ENCODE measurements at regions of chr10 and their contacts with region 1.

Region 1: GRCh38 chr10:125936331-125936730 is 40.0 kb downstream of the FANK1 start:
- DNase-seq: no peak
- H3K4me3 ChIP-seq: no peak overlapping the region
- H3K27ac ChIP-seq: no peak overlapping the region
- H3K27me3 ChIP-seq: peaks cover 8% of the 10 kb centered on the region
- CTCF ChIP-seq: no peak

Region 2: DNA sequence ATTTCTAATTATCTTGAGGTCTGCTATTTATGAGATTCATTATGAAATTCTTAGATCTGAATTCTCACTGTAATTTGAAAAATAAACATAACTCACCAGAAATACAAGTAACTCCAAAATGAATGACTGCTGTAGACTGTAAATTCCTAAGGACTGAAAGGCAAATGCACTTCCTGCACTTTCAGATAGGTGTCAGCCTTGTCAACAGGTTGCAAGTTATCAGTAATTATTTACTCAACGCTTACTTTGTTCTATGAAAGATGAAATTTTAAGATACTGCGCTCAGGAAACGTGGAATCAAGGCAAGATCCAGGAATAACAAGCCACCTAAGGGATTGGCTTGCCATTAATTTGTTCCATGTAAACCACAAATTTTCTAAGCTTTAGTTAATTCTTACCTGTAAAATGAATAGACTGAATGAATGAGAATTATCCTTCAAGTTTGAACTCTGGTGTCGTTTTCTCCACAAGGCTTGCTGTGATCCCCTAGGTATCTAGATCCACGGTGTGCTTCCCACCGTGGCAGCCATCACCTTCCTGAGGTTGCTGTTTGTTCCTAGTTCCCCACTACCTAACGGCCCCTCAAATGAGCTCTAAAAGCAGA is 67.9 kb before region 1 on chr10:
- CTCF ChIA-PET with region 1: interaction called, 14 read pairs
- POLR2A ChIA-PET with region 1: no interaction called
- DNase-seq: peak; percentile 32
- H3K4me3 ChIP-seq: no peak overlapping the region
- H3K27ac ChIP-seq: no peak overlapping the region
- H3K27me3 ChIP-seq: no peaks in the 10 kb centered on the region
- CTCF ChIP-seq: peak; percentile 80

Region 3: DNA sequence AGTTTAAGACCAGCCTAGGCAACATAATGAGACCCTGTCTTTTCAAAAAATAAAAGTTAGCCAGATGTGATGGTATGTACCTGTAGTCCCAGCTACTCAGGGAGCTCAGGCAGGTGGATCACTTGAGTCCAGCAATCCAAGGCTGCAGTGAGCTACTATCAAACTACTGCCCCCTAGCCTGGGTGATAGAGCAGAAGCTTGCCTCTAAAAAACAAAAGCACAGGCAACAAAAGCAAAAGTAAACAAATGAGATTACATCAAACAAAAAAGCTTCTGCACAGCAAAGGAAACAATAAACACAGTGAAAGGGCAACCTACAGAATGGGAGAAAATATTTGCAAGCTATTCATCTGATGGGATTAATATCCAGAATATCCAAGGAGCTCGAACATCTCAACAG is 25.4 kb after region 1 on chr10:
- CTCF ChIA-PET with region 1: interaction called, 12 read pairs
- POLR2A ChIA-PET with region 1: no interaction called
- DNase-seq: no peak
- H3K4me3 ChIP-seq: no peak overlapping the region
- H3K27ac ChIP-seq: no peak overlapping the region
- H3K27me3 ChIP-seq: peaks cover 4% of the 10 kb centered on the region
- CTCF ChIP-seq: no peak

Region 4: DNA sequence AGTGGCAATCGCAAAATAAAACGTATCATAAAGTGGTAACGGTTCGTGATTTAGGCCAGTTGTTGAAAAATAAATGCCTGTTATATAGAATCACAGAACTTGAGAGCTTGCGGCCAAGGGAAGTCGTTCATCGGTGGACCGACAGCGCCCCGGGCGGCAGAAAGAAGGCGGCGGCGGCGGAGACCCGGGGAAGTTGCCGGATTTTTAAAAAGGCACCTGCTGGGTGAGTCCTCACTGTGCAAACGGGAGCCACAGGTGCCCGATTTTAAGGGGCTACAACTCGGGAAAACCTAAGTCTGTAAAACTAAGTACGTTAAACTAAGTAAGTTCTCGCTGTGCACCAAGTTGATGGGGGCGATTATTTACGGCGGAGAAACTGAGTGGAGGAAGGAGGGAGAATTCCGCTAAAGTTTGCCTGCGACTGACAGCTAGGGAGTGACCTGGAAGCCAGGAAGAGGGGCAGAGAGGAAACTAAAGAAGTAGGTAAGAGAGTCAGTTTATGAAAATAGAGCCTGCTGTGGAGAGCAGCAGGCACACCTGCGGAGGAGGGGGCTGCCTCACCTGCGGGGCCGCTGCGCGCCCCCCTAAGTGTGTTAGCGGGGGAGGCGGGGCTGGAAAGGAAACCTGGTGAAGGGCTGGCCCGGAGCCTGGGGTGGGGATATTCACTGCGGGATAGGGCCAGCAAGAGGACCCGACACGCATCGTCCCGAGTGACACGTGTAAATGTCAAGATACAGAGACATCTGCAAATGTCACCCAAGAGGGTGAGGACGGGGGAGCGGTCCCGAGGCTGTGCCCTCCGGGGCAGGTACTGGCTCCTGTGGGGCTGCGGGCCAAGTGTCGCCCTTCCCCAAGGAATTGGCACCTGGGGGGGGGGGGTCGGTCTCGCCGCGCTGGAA is 450.9 kb after region 1 on chr10:
- CTCF ChIA-PET with region 1: interaction called, 21 read pairs
- POLR2A ChIA-PET with region 1: no interaction called
- DNase-seq: no peak
- H3K4me3 ChIP-seq: peak overlapping the region; percentile 65
- H3K27ac ChIP-seq: peak overlapping the region; percentile 31
- H3K27me3 ChIP-seq: no peaks in the 10 kb centered on the region
- CTCF ChIP-seq: peak; percentile 85

Region 5: DNA sequence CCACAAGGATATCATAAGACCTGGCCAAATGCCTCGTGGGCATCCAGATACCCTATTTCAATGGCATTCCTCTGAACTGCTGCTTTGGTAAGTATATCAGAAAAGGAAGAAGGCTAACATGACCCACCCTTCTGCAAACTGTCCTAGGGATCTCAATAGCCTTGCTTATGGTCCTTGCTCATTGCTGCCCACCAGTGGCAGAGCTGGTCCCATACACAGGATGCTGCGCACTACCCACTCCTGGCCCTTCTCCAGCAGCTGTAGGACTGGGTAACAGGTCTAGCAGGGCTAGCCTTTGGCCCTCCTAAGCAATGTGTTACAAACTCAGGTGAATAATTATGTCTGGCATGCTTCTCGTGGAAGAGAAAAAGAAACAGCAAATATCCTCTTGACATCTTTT is 661.7 kb after region 1 on chr10:
- CTCF ChIA-PET with region 1: interaction called, 22 read pairs
- POLR2A ChIA-PET with region 1: no interaction called
- DNase-seq: no peak
- H3K4me3 ChIP-seq: no peak overlapping the region
- H3K27ac ChIP-seq: no peak overlapping the region
- H3K27me3 ChIP-seq: no peaks in the 10 kb centered on the region
- CTCF ChIP-seq: peak; percentile 66

Region 6: GRCh38 chr10:126749015-126749655 is 812.8 kb after region 1 on chr10:
- CTCF ChIA-PET with region 1: interaction called, 16 read pairs
- POLR2A ChIA-PET with region 1: no interaction called
- DNase-seq: peak; percentile 58
- H3K4me3 ChIP-seq: no peak overlapping the region
- H3K27ac ChIP-seq: no peak overlapping the region
- H3K27me3 ChIP-seq: no peaks in the 10 kb centered on the region
- CTCF ChIP-seq: peak; percentile 84

Measured in AG04450 (cell line).